Caco-2 (cell line): ENCODE measurements at regions of chr10 and their contacts with region 1.

Region 1: GRCh38 chr10:58555170-58555929 is 42.7 kb downstream of the BICC1 start:
- DNase-seq: peak; percentile 87 to 90
- H3K4me3 ChIP-seq: no peak overlapping the region
- H3K4me3 Mint-ChIP-seq: peak overlapping the region; percentile 54
- H3K27ac Mint-ChIP-seq: peak overlapping the region; percentile 27
- H3K4me1 ChIP-seq: peaks cover 74% of the 10 kb centered on the region
- H3K4me1 Mint-ChIP-seq: peaks cover 79% of the 10 kb centered on the region
- H3K27me3 ChIP-seq: no peaks in the 10 kb centered on the region
- H3K27me3 Mint-ChIP-seq: no peaks in the 10 kb centered on the region
- CTCF ChIP-seq: no peak

Region 2: DNA sequence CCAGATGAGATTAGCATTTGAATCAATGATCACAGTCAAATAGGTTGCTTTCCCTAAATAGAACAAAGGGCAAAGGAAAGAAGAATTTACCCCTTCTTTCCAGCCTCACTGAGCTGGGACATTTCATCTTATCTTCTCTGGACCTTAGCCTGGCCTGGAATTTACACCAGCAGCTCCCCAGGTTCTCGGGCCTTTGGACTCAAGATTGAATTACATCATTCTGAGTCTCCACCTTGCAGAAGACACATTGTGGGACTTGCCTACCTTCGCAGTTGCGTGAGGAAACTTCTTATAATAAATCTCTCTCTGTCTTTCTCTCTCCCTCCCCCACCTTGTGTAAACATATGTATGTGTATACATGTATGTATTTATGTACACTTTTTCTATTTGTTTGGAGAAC is 1020.0 kb before region 1 on chr10:
- CTCF ChIA-PET with region 1: no interaction called
- POLR2A ChIA-PET with region 1: no interaction called
- intact Hi-C with region 1: no loop called
- DNase-seq: peak; percentile 61 to 87
- H3K4me3 ChIP-seq: no peak overlapping the region
- H3K4me3 Mint-ChIP-seq: peak overlapping the region; percentile 8
- H3K27ac Mint-ChIP-seq: peak overlapping the region; percentile 42
- H3K4me1 ChIP-seq: peaks cover 10% of the 10 kb centered on the region
- H3K4me1 Mint-ChIP-seq: peaks cover 8% of the 10 kb centered on the region
- H3K27me3 ChIP-seq: no peaks in the 10 kb centered on the region
- H3K27me3 Mint-ChIP-seq: peaks cover 1% of the 10 kb centered on the region
- CTCF ChIP-seq: no peak

Region 3: GRCh38 chr10:58513188-58514110 is 41.9 kb before region 1 on chr10:
- CTCF ChIA-PET with region 1: no interaction called
- POLR2A ChIA-PET with region 1: no interaction called
- intact Hi-C with region 1: loop called (anchors 1 kb)
- DNase-seq: peak; percentile 89 to 91
- H3K4me3 ChIP-seq: peak overlapping the region; percentile 98
- H3K4me3 Mint-ChIP-seq: peak overlapping the region; percentile 94
- H3K27ac Mint-ChIP-seq: peak overlapping the region; percentile 78
- H3K4me1 ChIP-seq: peaks cover 33% of the 10 kb centered on the region
- H3K4me1 Mint-ChIP-seq: peaks cover 19% of the 10 kb centered on the region
- H3K27me3 ChIP-seq: no peaks in the 10 kb centered on the region
- H3K27me3 Mint-ChIP-seq: no peaks in the 10 kb centered on the region
- CTCF ChIP-seq: no peak

Region 4: DNA sequence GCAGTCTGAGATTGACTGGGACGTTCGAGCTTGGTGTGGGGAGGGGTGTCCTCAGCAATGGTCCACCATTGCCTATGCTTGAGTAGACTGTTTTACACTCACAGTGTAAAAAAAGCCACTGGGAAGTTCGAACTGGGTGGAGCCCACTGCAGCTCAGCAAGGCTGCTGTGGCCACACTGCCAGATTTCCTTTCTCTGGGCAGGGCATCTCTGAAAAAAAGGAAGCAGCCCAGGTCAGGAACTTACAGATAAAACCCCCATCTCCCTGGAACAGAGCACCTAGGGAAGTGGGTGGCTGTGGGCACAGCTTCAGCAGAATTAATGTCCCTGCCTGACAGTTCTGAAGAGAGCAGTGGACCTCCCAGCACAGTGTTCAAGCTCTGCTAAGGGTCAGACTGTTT is 37.7 kb after region 1 on chr10:
- CTCF ChIA-PET with region 1: no interaction called
- POLR2A ChIA-PET with region 1: no interaction called
- intact Hi-C with region 1: loop called (anchors 1 kb)
- DNase-seq: no peak
- H3K4me3 ChIP-seq: no peak overlapping the region
- H3K4me3 Mint-ChIP-seq: no peak overlapping the region
- H3K27ac Mint-ChIP-seq: no peak overlapping the region
- H3K4me1 ChIP-seq: peaks cover 20% of the 10 kb centered on the region
- H3K4me1 Mint-ChIP-seq: peaks cover 28% of the 10 kb centered on the region
- H3K27me3 ChIP-seq: no peaks in the 10 kb centered on the region
- H3K27me3 Mint-ChIP-seq: no peaks in the 10 kb centered on the region
- CTCF ChIP-seq: no peak